HepG2 (cell line): ENCODE measurements at regions of chr1 and their contacts with region 1.

Region 1: DNA sequence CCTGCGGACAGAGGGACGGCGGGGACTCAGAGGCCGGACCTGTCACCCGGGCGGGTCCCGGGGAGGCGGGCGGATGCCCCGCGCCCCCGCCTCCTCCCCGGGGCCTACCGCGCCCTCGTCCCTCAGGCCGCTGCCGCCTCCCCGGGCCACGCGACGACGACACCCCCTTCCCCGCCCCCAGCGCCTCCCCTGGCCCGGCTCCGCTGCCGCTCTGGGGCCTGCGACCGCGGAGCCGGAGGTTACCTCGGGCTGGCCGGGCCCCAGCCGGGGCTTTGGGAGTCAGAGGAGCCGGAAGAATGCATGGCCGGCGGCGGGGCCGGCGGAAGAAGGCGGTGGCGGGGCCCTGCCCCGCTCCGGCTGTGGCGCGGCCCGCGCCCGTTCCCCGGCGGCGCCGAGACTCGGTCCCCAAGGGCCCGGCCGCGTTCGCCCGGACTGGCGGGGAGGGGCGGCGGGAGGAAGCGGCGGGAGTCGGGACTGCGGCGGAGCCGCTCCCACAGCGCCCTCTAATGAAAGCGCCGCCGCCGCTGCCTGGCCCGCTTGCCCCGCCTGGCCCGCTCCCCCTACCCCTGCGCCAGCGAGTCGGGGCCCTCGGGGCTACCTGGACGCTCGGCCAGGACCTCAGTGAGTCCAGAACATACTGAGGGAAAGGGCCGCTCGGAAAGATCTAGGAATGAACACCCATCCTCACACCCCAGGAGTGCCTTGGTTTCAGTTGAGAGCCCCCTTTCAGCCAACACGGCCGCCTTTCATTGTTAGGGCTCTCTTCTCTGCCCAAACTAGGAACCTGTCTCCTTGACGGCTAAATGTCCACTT is at the start of gene LPGAT1:
- DNase-seq: peak; percentile 24
- ATAC-seq: peak; percentile 94
- H3K4me3 ChIP-seq: peak within 1 kb of the TSS; percentile 81 to 95 (median 82)
- H3K27ac ChIP-seq: peak within 1 kb of the TSS; percentile 74
- H3K4me1 ChIP-seq: peaks cover 27% of the 10 kb centered on the region
- H3K27me3 ChIP-seq: no peaks in the 10 kb centered on the region
- CTCF ChIP-seq: peak; percentile 84
- EP300 ChIP-seq: peak in 1 of 2 experiments; percentile 12; a peak in 1 of 4 replicates
- POLR2A ChIP-seq: peak; percentile 12 to 43; a peak in 2 of 4 replicates
- RAD21 ChIP-seq: peak; percentile 93
- total RNA-seq, gene LPGAT1: 48.3 and 51.0 TPM in 2 replicates

Region 2: DNA sequence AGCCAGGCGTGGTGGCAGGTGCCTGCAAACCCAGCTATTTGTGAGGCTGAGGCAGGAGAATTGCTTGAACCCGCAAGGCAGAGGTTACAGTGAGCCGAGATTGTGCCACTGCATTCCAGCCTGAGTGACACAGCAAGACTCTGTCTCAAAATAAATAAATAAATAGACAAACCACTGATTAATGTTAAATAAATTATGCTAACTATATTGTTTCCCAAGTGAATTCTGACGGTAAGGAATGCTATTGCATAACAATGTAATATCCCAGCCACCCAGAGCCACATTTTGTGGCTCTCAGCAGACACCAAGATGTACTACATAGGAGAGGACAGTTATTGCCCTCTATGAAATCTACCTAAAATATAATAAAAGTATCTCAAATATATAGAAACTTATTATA is 55.4 kb before region 1 on chr1:
- CTCF ChIA-PET with region 1: no interaction called
- POLR2A ChIA-PET with region 1: no interaction called
- in situ Hi-C with region 1: no loop called
- intact Hi-C with region 1: no loop called
- DNase-seq: no peak
- ATAC-seq: no peak
- H3K4me3 ChIP-seq: no peak overlapping the region
- H3K27ac ChIP-seq: no peak overlapping the region
- H3K4me1 ChIP-seq: peaks cover 4% of the 10 kb centered on the region; the same call in 1 of the 2 replicates
- H3K27me3 ChIP-seq: no peaks in the 10 kb centered on the region
- CTCF ChIP-seq: no peak
- EP300 ChIP-seq: no peak
- POLR2A ChIP-seq: no peak
- RAD21 ChIP-seq: no peak

Region 3: DNA sequence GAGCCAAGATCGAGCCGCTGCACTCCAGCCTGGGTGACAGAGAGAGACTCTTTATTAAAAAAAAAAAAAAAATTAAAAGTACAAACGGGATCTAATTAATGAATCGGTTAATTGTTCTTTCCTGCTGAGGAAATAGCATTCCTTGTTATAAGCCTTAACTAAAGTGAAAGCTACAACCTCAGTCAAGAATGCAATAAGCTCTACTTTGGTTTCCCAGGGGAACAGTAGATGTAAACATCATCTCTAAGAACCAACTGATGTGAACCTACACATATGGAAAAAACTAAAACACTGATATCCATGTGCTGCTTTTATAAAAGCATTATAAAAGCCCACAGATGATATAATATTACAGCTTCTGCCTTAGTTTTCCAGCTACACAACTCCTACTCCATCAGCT is 41.9 kb before region 1 on chr1:
- CTCF ChIA-PET with region 1: no interaction called
- POLR2A ChIA-PET with region 1: interaction called, 3 read pairs
- in situ Hi-C with region 1: no loop called
- intact Hi-C with region 1: loop called (anchors 2 kb)
- DNase-seq: no peak
- ATAC-seq: no peak
- H3K4me3 ChIP-seq: no peak overlapping the region
- H3K27ac ChIP-seq: peak overlapping the region; percentile 67
- H3K4me1 ChIP-seq: peaks cover 60% of the 10 kb centered on the region
- H3K27me3 ChIP-seq: no peaks in the 10 kb centered on the region
- CTCF ChIP-seq: no peak
- EP300 ChIP-seq: no peak
- POLR2A ChIP-seq: no peak
- RAD21 ChIP-seq: no peak

Region 4: GRCh38 chr1:211851174-211851573 is 20.6 kb after region 1 on chr1:
- CTCF ChIA-PET with region 1: no interaction called
- POLR2A ChIA-PET with region 1: no interaction called
- in situ Hi-C with region 1: no loop called
- intact Hi-C with region 1: no loop called
- DNase-seq: no peak
- ATAC-seq: no peak
- H3K4me3 ChIP-seq: no peak overlapping the region
- H3K27ac ChIP-seq: no peak overlapping the region
- H3K4me1 ChIP-seq: no peaks in the 10 kb centered on the region
- H3K27me3 ChIP-seq: peaks cover 0 to 3% of the 10 kb centered on the region in 2 experiments; a peak in 2 of 5 replicates
- CTCF ChIP-seq: no peak
- EP300 ChIP-seq: no peak
- POLR2A ChIP-seq: no peak
- RAD21 ChIP-seq: no peak

Region 5: GRCh38 chr1:211885747-211886522 is 55.4 kb after region 1 on chr1:
- CTCF ChIA-PET with region 1: no interaction called
- POLR2A ChIA-PET with region 1: no interaction called
- in situ Hi-C with region 1: no loop called
- intact Hi-C with region 1: loop called (anchors 10 kb)
- DNase-seq: peak; percentile 87
- ATAC-seq: peak; percentile 97
- H3K4me3 ChIP-seq: 0 out of 6 replicates have a peak overlapping the region, but pooled peaks of 1 of the 3 experiments have one; percentile 3
- H3K27ac ChIP-seq: peak overlapping the region; percentile 63
- H3K4me1 ChIP-seq: peaks cover 55% of the 10 kb centered on the region
- H3K27me3 ChIP-seq: no peaks in the 10 kb centered on the region
- CTCF ChIP-seq: peak; percentile 41
- EP300 ChIP-seq: peak; percentile 20 to 83; a peak in 2 of 4 replicates
- POLR2A ChIP-seq: no peak
- RAD21 ChIP-seq: 0 out of 2 replicates have a peak, but pooled peaks have one; percentile 22

Region 6: GRCh38 chr1:211944733-211945500 is 114.4 kb after region 1 on chr1:
- CTCF ChIA-PET with region 1: interaction called, 3 read pairs
- POLR2A ChIA-PET with region 1: no interaction called
- in situ Hi-C with region 1: loop called (anchors 10 kb)
- intact Hi-C with region 1: loop called (anchors 1 kb)
- DNase-seq: peak; percentile 94
- ATAC-seq: peak; percentile 99
- H3K4me3 ChIP-seq: no peak overlapping the region
- H3K27ac ChIP-seq: no peak overlapping the region
- H3K4me1 ChIP-seq: peaks cover 31% of the 10 kb centered on the region
- H3K27me3 ChIP-seq: no peaks in the 10 kb centered on the region
- CTCF ChIP-seq: peak; percentile 96
- EP300 ChIP-seq: peak in 1 of 2 experiments; percentile 58; a peak in 1 of 4 replicates
- POLR2A ChIP-seq: no peak
- RAD21 ChIP-seq: peak; percentile 92

Region 7: GRCh38 chr1:212161231-212161781 is 330.8 kb after region 1 on chr1:
- CTCF ChIA-PET with region 1: no interaction called
- POLR2A ChIA-PET with region 1: no interaction called
- in situ Hi-C with region 1: no loop called
- intact Hi-C with region 1: no loop called
- DNase-seq: no peak
- ATAC-seq: no peak
- H3K4me3 ChIP-seq: no peak overlapping the region
- H3K27ac ChIP-seq: no peak overlapping the region
- H3K4me1 ChIP-seq: peaks cover 22% of the 10 kb centered on the region
- H3K27me3 ChIP-seq: no peaks in the 10 kb centered on the region
- CTCF ChIP-seq: no peak
- EP300 ChIP-seq: no peak
- POLR2A ChIP-seq: no peak
- RAD21 ChIP-seq: no peak